Common myeloid progenitor, CD34-positive (primary cell): ENCODE measurements at regions of chr9 and their contacts with region 1.

Region 1: GRCh38 chr9:38673847-38674246 is 46.1 kb downstream of the FAM240B start:
- DNase-seq: no peak
- H3K4me3 ChIP-seq: no peak overlapping the region
- H3K27ac ChIP-seq: no peak overlapping the region
- H3K4me1 ChIP-seq: peaks cover 0 to 15% (median 10%) of the 10 kb centered on the region in 4 experiments
- H3K27me3 ChIP-seq: no peaks in the 10 kb centered on the region

Region 2: DNA sequence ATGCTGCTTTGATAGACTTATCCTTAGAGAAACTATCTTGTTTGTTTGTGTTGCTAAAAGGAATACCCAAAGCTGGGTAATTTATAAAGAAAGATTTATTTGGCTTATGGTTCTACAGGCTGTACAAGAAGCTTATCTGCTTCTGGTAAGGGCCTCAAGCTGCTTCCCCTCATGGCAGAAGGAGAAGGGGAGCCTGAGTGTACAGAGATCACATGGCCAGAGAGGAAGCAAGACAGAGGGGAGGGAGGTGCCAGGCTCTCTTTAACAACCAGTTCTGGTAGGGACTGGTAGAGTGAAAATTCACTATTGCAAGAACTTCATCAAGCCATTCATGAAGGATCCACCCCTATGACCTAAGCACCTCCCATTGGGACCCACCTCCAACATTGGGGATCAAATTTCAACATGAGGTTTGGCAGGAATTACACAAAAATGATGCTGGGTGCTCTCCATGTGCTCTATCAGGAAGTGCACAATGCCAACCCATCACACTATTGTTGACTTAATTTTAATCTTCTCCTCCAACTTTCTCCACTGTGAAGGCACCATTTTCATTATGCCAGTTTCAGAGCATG is 489.8 kb before region 1 on chr9:
- CTCF ChIA-PET with region 1: no interaction called
- POLR2A ChIA-PET with region 1: no interaction called
- DNase-seq: peak in 1 of 3 donors; percentile 28
- H3K4me3 ChIP-seq: no peak overlapping the region
- H3K27ac ChIP-seq: no peak overlapping the region
- H3K4me1 ChIP-seq: peaks cover 0 to 11% (median 1%) of the 10 kb centered on the region in 4 experiments
- H3K27me3 ChIP-seq: no peaks in the 10 kb centered on the region

Region 3: DNA sequence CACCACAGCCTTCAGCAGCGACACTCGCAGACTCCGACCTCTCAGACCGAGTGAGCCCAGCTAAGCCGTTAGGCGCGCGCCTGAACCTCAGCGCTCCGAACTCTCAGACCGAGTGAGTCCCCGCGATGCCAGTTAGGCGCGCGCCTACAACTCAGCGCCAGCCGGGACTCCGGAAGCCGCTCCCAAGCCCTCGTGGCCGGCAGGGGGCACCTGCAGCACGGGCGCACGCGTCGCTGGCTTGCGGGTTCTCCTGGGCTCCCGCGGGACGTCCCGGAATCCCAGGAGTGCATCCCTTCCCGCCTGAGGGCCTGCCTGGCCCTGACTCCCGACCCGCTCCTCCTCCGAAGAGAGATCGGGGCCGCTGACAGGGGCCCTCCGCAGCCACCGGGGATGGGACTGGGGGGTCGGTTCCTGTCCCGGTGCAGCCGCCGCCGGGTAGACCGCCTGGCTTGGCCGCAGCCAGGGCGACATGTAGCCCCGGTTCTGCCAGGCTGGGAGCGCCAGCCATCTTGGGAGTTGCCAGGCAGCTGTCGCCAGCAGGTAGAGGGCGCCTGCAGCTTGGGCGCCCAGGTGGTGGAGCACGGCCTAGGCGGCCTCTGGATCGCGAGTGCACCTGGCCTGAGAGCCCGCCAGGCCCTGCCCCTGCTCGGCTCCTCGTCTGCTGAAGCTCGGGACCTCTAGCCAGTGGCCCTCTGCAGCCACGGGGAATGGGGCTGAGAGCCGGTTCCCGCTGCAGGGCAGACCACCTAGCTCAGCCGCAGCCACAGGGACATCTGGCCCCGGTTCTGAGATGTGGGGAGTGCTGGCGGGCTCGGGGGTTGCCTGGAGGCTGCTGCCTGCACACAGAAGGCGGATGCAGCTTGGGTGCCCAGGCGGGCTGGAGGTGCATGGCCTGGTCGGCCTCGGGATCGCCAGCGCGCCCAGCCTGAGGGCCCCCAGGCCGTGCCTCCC is 53.1 kb before region 1 on chr9 and contains the start of gene ANKRD18A:
- CTCF ChIA-PET with region 1: no interaction called
- POLR2A ChIA-PET with region 1: no interaction called
- DNase-seq: peak; percentile 39 to 86 (median 81)
- H3K4me3 ChIP-seq: peak within 1 kb of the TSS; percentile 32 to 73 (median 49)
- H3K27ac ChIP-seq: no peak within 1 kb of the TSS
- H3K4me1 ChIP-seq: peaks cover 0 to 30% (median 23%) of the 10 kb centered on the region in 4 experiments
- H3K27me3 ChIP-seq: peaks cover 6 to 82% (median 26%) of the 10 kb centered on the region in 5 experiments

Region 4: DNA sequence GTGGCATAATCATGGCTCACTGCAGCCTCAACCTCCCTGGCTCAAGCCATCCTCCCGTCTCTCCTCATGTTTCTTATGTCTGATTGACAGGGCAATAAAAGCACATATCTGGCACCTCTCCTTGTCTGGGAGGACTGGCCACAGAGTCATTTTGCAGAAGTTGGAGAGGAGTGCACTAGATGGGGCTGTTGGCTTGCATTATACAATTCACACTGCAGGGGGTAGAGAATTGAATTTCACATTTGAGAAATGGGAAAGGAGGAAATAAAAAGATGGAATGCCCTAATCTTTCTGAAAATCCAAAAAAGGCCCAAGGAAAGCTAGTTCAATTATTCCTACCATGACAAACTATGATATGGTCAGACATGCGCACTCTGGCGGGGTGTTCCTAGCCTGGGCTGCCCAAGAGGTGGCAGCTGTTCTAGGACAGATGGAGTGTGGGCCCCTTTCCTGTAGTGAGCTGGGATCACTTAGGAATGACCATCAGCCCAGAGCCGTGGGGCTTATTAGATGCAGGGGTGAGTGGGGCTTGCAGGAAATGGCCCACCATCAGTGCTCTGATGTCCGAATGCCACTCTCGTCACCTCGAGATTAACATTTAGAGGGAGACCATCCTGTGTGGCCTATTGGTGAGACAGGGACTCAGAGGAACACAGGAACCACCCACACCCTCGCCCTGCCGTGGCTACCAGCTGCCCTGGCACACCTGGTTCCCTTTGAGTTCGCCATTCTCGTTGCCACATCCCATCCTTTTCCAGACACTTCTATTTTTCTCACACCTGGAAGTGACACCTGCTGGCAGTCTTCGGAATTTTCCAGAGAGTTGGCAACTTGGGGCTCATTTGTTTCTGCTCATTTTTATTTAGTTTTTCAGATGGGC is 31.6 kb before region 1 on chr9:
- CTCF ChIA-PET with region 1: interaction called, 10 read pairs
- POLR2A ChIA-PET with region 1: no interaction called
- DNase-seq: peak; percentile 27 to 54 (median 51)
- H3K4me3 ChIP-seq: no peak overlapping the region
- H3K27ac ChIP-seq: no peak overlapping the region
- H3K4me1 ChIP-seq: no peaks in the 10 kb centered on the region
- H3K27me3 ChIP-seq: peaks cover 0 to 3% (median 0%) of the 10 kb centered on the region in 5 experiments